ENCODE measurements at regions of chr3 and their contacts with region 1.

Region 1: DNA sequence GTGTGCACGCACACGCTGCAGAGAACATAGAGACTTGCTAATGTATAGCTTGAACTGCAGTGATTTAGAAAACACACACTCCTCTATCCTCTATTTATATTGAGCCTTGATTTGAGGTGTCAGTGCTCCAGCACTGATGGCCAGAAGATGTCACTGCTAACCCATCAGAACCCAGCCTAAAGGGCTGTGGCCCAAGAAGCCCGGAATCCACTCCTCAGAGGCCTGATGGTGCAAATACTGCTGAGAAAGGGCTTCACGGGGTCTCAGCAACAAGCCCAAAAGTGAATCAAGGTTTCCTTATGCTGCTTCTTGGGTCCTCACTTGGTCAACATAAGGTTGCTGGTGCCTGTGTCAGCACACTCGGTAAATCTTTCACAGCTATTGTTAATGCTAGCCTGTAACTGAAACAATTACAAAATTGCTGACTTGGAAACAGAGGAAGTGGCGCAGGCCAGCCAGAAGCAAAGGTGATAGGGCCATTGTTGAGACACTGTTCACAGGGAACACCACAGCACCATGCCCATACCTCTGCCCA is 60.3 kb downstream of the HEG1 start:
- DNase-seq: peak; percentile 54 to 57
- H3K4me3 ChIP-seq: no peak overlapping the region
- H3K27ac ChIP-seq: peak overlapping the region; percentile 40 to 90 (median 76)
- H3K4me1 ChIP-seq: peaks cover 47 to 62% of the 10 kb centered on the region in 2 donors
- H3K27me3 ChIP-seq: no peaks in the 10 kb centered on the region
- CTCF ChIP-seq: peak in 4 of 6 experiments; percentile 56 to 73 (median 62)
- POLR2A ChIP-seq: no peak

Region 2: GRCh38 chr3:125165189-125165947 is 169.8 kb after region 1 on chr3:
- intact Hi-C with region 1: loop called (anchors 10 kb)
- DNase-seq: peak; percentile 61 to 65
- H3K4me3 ChIP-seq: no peak overlapping the region
- H3K27ac ChIP-seq: peak overlapping the region in 1 of 3 donors; percentile 13
- H3K4me1 ChIP-seq: peaks cover 22 to 41% of the 10 kb centered on the region in 2 donors
- H3K27me3 ChIP-seq: no peaks in the 10 kb centered on the region
- CTCF ChIP-seq: peak; percentile 38 to 80 (median 70)
- POLR2A ChIP-seq: no peak

Region 3: GRCh38 chr3:125437631-125438435 is 442.3 kb after region 1 on chr3:
- intact Hi-C with region 1: loop called (anchors 5 kb)
- DNase-seq: peak; percentile 61 to 68
- H3K4me3 ChIP-seq: no peak overlapping the region
- H3K27ac ChIP-seq: no peak overlapping the region
- H3K4me1 ChIP-seq: peaks cover 0 to 8% of the 10 kb centered on the region in 2 donors
- H3K27me3 ChIP-seq: no peaks in the 10 kb centered on the region
- CTCF ChIP-seq: peak; percentile 77 to 98 (median 87)
- POLR2A ChIP-seq: no peak